A549 (cell line): ENCODE measurements at regions of chr13 and their contacts with region 1.

Region 1: GRCh38 chr13:51452361-51453206 is at the start of gene INTS6:
- DNase-seq: peak; percentile 85 to 98
- ATAC-seq: peak; percentile 73 to 91
- H3K4me3 ChIP-seq: peak within 1 kb of the TSS; percentile 100
- H3K27ac ChIP-seq: peak within 1 kb of the TSS; percentile 100
- H3K4me1 ChIP-seq: peaks cover 31% of the 10 kb centered on the region
- CTCF ChIP-seq: no peak
- EP300 ChIP-seq: no peak
- POLR2A ChIP-seq: peak; percentile 99
- RAD21 ChIP-seq: no peak; a peak in 1 of 5 replicates
- polyA plus RNA-seq, gene INTS6: 37.1 and 42.6 TPM in 2 replicates

Region 2: DNA sequence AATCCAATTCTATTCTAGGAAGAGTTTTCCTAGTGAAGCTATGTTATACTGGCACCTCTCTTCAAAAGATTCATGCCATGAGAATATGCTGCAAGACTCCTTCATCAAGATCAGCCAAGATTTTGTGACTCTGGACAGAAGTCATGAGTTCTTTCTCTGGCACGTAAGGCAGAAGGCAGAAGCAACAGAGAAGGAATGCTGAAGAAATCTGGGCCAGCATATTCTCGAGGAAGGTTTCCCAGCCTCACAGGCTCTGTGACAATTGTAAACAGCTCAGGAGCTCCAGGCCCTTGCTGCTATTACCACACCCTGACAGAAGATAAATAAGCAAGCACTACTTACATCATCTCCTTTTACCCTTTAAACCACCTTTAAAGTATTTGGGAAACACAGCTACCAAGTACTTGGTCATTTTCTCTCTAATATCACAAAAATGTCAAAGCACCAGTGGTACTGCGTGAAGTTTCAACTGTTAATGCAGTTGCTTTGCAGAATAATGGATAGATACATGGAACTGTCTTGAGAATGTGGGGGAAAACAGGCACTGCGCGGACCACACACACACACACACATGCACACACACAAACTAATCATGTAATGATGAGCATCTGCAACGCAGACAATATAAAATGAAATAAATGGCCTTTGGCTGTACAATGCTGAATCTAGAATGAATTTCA is 55.2 kb before region 1 on chr13:
- CTCF ChIA-PET with region 1: no interaction called
- POLR2A ChIA-PET with region 1: no interaction called
- DNase-seq: peak in 1 of 2 experiments; percentile 31
- ATAC-seq: peak in 1 of 2 experiments; percentile 70; a peak in 4 of 6 replicates
- H3K4me3 ChIP-seq: no peak overlapping the region
- H3K27ac ChIP-seq: no peak overlapping the region
- H3K4me1 ChIP-seq: peaks cover 26% of the 10 kb centered on the region
- CTCF ChIP-seq: no peak
- EP300 ChIP-seq: no peak
- POLR2A ChIP-seq: no peak
- RAD21 ChIP-seq: no peak

Region 3: GRCh38 chr13:51426982-51427381 is 25.6 kb before region 1 on chr13:
- CTCF ChIA-PET with region 1: no interaction called
- POLR2A ChIA-PET with region 1: no interaction called
- DNase-seq: no peak
- ATAC-seq: no peak
- H3K4me3 ChIP-seq: no peak overlapping the region
- H3K27ac ChIP-seq: no peak overlapping the region
- H3K4me1 ChIP-seq: 0 out of 3 replicates have a peak, but pooled peaks cover 4% of the 10 kb centered on the region
- CTCF ChIP-seq: no peak
- EP300 ChIP-seq: no peak
- POLR2A ChIP-seq: no peak
- RAD21 ChIP-seq: no peak

Region 4: GRCh38 chr13:51475727-51476501 is 23.3 kb after region 1 on chr13:
- CTCF ChIA-PET with region 1: interaction called, 3 read pairs
- POLR2A ChIA-PET with region 1: interaction called, 13 read pairs
- DNase-seq: no peak
- ATAC-seq: no peak
- H3K4me3 ChIP-seq: no peak overlapping the region
- H3K27ac ChIP-seq: 0 out of 6 replicates have a peak overlapping the region, but pooled peaks of 1 of the 2 experiments have one; percentile 33
- H3K4me1 ChIP-seq: peaks cover 27% of the 10 kb centered on the region
- CTCF ChIP-seq: no peak
- EP300 ChIP-seq: no peak
- POLR2A ChIP-seq: no peak
- RAD21 ChIP-seq: no peak

Region 5: DNA sequence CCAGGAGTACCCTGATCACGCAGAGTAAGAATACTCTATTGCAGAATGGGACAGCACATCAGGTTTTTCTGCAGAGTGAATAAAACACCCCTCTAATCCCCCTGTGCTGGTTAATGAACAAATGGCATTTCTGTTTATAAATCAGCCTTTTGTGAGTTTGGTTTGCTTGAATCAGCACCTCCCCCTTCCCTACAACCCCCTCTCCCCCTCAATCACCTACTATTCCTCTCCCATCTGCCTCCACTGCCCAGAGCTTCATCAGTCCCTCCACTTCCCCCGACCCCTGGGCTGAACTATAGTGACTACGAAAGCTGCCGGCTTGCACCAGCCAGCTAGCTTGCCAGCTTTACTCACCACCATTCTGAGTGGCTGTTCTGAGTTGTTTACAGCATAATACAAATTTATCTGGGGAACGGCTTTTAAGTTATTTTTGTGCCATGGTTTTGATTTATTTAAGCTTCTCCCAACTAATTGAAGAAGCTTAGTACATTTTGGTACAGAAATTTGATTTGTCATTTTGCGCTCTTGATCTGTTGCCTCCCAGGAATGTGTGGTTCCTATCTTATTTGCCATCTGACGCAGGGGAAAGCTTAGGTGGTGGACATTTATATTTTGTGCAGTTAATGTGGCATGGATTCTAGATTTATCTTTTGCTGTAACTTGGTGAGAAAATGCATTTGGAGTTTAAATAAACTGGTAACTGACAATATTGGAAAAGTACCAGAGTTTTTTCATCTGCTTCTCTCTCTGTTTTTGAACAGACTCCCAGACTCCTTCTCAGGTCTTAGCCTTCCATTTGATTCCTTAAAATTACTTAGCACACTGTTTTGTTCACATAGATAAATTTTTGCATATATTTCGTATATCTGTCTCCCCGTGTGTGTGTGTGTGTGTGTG is 90.0 kb after region 1 on chr13:
- CTCF ChIA-PET with region 1: no interaction called
- POLR2A ChIA-PET with region 1: interaction called, 34 read pairs
- DNase-seq: peak in 1 of 2 experiments; percentile 33
- ATAC-seq: peak; percentile 89 to 92
- H3K4me3 ChIP-seq: peak overlapping the region; percentile 27
- H3K27ac ChIP-seq: peak overlapping the region; percentile 78 to 86
- H3K4me1 ChIP-seq: peaks cover 32% of the 10 kb centered on the region
- CTCF ChIP-seq: no peak
- EP300 ChIP-seq: no peak
- POLR2A ChIP-seq: no peak
- RAD21 ChIP-seq: no peak

Region 6: GRCh38 chr13:51590971-51591627 is 138.5 kb after region 1 on chr13:
- CTCF ChIA-PET with region 1: interaction called, 4 read pairs
- POLR2A ChIA-PET with region 1: interaction called, 43 read pairs
- DNase-seq: peak; percentile 35 to 80
- ATAC-seq: peak; percentile 97 to 99
- H3K4me3 ChIP-seq: peak overlapping the region; percentile 21; the same call in 1 of the 3 replicates
- H3K27ac ChIP-seq: peak overlapping the region; percentile 79 to 92
- H3K4me1 ChIP-seq: peaks cover 82% of the 10 kb centered on the region
- CTCF ChIP-seq: no peak
- EP300 ChIP-seq: peak in 1 of 2 experiments; percentile 66; a peak in 2 of 5 replicates
- POLR2A ChIP-seq: no peak
- RAD21 ChIP-seq: peak in 1 of 2 experiments; percentile 36; a peak in 3 of 5 replicates

Region 7: GRCh38 chr13:51681037-51681678 is 228.6 kb after region 1 on chr13:
- CTCF ChIA-PET with region 1: no interaction called
- POLR2A ChIA-PET with region 1: interaction called, 11 read pairs
- DNase-seq: peak in 1 of 2 experiments; percentile 51
- ATAC-seq: peak; percentile 88 to 96
- H3K4me3 ChIP-seq: no peak overlapping the region
- H3K27ac ChIP-seq: peak overlapping the region; percentile 46 to 72; a peak in 5 of 6 replicates
- H3K4me1 ChIP-seq: peaks cover 61% of the 10 kb centered on the region
- CTCF ChIP-seq: no peak
- EP300 ChIP-seq: no peak
- POLR2A ChIP-seq: no peak
- RAD21 ChIP-seq: no peak; a peak in 1 of 5 replicates

Region 8: GRCh38 chr13:51764184-51765141 is 311.9 kb after region 1 on chr13:
- CTCF ChIA-PET with region 1: no interaction called
- POLR2A ChIA-PET with region 1: interaction called, 11 read pairs
- DNase-seq: peak; percentile 4 to 42
- ATAC-seq: peak; percentile 74 to 81
- H3K4me3 ChIP-seq: no peak overlapping the region
- H3K27ac ChIP-seq: peak overlapping the region; percentile 40 to 57; a peak in 4 of 6 replicates
- H3K4me1 ChIP-seq: peaks cover 16% of the 10 kb centered on the region
- CTCF ChIP-seq: no peak
- EP300 ChIP-seq: no peak
- POLR2A ChIP-seq: no peak
- RAD21 ChIP-seq: no peak